IMR-90 (cell line): ENCODE measurements at regions of chr3 and their contacts with region 1.

Region 1: GRCh38 chr3:59632760-59633573 is 583.1 kb upstream of the CFAP20DC start:
- DNase-seq: peak; percentile 50
- ATAC-seq: peak; percentile 90
- H3K4me3 ChIP-seq: no peak overlapping the region
- H3K27ac ChIP-seq: peak overlapping the region; percentile 53; the same call in 1 of the 2 replicates
- H3K4me1 ChIP-seq: peaks cover 7% of the 10 kb centered on the region
- H3K27me3 ChIP-seq: no peaks in the 10 kb centered on the region
- CTCF ChIP-seq: no peak
- POLR2A ChIP-seq: no peak
- RAD21 ChIP-seq: no peak

Region 2: DNA sequence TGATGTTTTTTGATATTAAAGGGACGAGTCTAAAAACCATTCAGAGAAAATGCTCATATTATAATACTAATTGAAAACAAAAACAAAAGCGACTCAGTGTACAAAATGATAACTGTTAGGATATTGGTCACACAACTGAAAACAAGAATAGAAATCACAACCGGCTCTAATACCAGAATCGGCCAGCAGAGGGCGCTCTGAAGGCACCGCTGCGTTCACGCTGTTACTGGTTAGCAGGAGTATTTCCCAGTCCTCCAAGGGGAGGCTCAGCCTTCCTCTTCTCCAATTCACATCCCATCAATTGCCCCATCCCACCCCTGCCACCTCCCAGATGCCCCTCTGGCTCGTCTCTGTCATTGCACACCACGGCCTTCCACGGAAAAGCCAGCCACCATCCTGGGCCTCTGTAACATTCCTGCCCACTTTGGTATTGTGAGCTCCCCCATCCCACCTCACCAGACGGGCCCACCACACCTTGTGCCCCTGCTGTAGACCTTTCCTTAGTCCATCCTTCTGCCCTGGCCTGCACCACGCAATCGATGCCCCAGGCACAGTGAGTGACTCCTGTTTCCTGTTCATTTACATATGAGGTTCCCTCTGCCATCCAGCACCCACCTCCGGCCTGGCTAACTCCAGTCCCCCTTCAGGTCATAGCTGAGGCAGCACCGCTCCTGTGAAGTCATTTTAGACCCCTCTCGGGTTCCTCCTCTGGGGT is 1064.2 kb before region 1 on chr3:
- CTCF ChIA-PET with region 1: interaction called, 3 read pairs
- POLR2A ChIA-PET with region 1: no interaction called
- dilution Hi-C with region 1: no loop called
- in situ Hi-C with region 1: no loop called
- intact Hi-C with region 1: loop called (anchors 10 kb)
- DNase-seq: peak; percentile 63
- ATAC-seq: peak; percentile 73
- H3K4me3 ChIP-seq: no peak overlapping the region
- H3K27ac ChIP-seq: no peak overlapping the region
- H3K4me1 ChIP-seq: peaks cover 2% of the 10 kb centered on the region; the same call in 1 of the 2 replicates
- H3K27me3 ChIP-seq: no peaks in the 10 kb centered on the region
- CTCF ChIP-seq: peak; percentile 88
- POLR2A ChIP-seq: no peak
- RAD21 ChIP-seq: peak; percentile 73

Region 3: GRCh38 chr3:59771768-59772181 is 138.8 kb after region 1 on chr3:
- CTCF ChIA-PET with region 1: no interaction called
- POLR2A ChIA-PET with region 1: no interaction called
- dilution Hi-C with region 1: no loop called
- in situ Hi-C with region 1: no loop called
- intact Hi-C with region 1: loop called (anchors 10 kb)
- DNase-seq: peak; percentile 94
- ATAC-seq: peak; percentile 86
- H3K4me3 ChIP-seq: no peak overlapping the region
- H3K27ac ChIP-seq: peak overlapping the region; percentile 22; the same call in 1 of the 2 replicates
- H3K4me1 ChIP-seq: peaks cover 15% of the 10 kb centered on the region
- H3K27me3 ChIP-seq: no peaks in the 10 kb centered on the region
- CTCF ChIP-seq: no peak
- POLR2A ChIP-seq: no peak
- RAD21 ChIP-seq: no peak

Region 4: DNA sequence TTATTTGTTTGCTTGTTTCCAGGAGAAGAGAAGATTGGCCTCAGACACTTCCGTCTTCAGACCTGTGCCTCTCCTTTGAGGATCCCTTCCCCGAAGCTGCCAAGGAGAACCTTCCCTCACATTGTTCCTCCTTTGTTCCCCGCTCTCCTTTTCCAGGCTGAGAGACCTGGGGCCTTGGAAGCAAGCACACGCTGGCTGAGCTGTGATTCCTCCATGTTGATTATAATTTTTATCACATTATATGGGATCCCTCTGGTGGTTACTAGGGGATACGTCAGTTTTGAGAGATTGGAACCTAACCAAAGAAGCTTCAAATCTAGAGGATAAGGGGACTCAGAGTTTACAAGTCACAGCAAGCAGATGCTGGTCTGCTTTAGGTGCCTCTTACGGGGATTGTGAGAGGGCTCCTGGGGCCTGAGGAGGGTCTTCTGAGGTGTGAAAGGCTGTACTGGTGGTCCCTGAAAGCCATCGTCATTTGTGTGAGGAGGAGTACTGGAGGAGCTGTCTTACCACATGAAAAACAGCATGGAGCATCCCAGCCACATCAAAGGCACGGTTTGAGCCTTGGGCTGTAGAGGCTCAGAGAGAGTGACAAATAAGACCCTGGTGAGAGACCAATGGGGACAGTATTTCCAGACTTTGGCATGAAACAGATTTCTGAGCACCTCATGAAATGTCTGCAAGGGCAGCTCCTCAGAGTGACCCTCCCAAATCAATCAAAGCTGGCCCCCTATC is 176.9 kb after region 1 on chr3:
- CTCF ChIA-PET with region 1: no interaction called
- POLR2A ChIA-PET with region 1: no interaction called
- dilution Hi-C with region 1: no loop called
- in situ Hi-C with region 1: no loop called
- intact Hi-C with region 1: loop called (anchors 5 kb)
- DNase-seq: peak; percentile 57
- ATAC-seq: peak; percentile 33; the same call in 1 of the 2 replicates
- H3K4me3 ChIP-seq: no peak overlapping the region
- H3K27ac ChIP-seq: peak overlapping the region; percentile 71
- H3K4me1 ChIP-seq: peaks cover 10% of the 10 kb centered on the region
- H3K27me3 ChIP-seq: no peaks in the 10 kb centered on the region
- CTCF ChIP-seq: peak; percentile 47
- POLR2A ChIP-seq: no peak
- RAD21 ChIP-seq: peak; percentile 47

Region 5: DNA sequence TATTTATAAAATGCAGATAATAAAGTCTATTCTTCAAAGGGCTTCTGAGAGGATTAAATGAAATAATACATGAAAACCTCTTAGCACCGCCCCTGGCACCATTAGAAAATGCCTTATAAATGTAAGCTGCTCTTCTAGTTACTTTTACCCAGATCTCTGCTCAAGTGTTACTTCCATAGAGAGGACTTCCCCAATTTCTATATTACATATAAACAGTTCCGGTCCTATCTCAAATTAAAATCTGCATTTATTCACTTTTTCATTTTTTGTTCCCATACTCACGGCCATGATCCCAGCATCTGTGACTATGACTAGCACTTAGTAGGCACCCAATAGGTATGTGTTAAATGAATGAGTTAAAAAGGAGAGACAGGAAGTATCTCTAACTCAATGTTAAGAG is 307.8 kb after region 1 on chr3:
- CTCF ChIA-PET with region 1: no interaction called
- POLR2A ChIA-PET with region 1: no interaction called
- dilution Hi-C with region 1: no loop called
- in situ Hi-C with region 1: no loop called
- intact Hi-C with region 1: no loop called
- DNase-seq: no peak
- ATAC-seq: no peak
- H3K4me3 ChIP-seq: no peak overlapping the region
- H3K27ac ChIP-seq: no peak overlapping the region
- H3K4me1 ChIP-seq: no peaks in the 10 kb centered on the region
- H3K27me3 ChIP-seq: no peaks in the 10 kb centered on the region
- CTCF ChIP-seq: no peak
- POLR2A ChIP-seq: no peak
- RAD21 ChIP-seq: no peak